ENCODE measurements at regions of chr2 and their contacts with region 1.

Region 1: GRCh38 chr2:131366643-131367042 is 2.7 kb upstream of the RAB6D start:
- DNase-seq: no peak
- ATAC-seq: no peak
- H3K4me3 ChIP-seq: no peak overlapping the region
- H3K27ac ChIP-seq: no peak overlapping the region
- H3K4me1 ChIP-seq: peaks cover 0 to 6% of the 10 kb centered on the region in 2 experiments; a peak in 3 of 5 replicates
- H3K27me3 ChIP-seq: peaks cover 10 to 16% of the 10 kb centered on the region in 2 experiments; a peak in 4 of 5 replicates
- CTCF ChIP-seq: no peak
- EP300 ChIP-seq: no peak
- POLR2A ChIP-seq: no peak
- RAD21 ChIP-seq: no peak

Region 2: DNA sequence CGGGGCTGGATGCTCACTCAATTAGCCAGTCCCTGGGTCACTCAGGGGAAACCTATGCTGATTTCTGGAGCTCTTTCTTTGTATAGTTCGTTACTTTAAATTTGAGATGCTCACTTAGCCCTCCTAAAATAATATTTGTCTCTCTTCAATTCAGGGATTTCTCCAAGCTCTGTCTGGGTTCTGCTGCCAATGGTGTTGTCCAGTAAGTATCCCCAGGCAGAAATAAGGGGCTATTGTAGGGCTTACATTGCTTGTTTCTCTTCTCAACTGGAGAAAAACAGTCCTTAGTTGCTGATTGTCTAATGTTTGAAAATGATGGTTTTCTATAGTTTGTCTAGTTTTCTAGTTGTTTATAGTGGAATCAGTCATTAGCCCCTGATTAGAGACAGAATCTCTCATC is 1382.2 kb before region 1 on chr2:
- CTCF ChIA-PET with region 1: no interaction called
- POLR2A ChIA-PET with region 1: no interaction called
- in situ Hi-C with region 1: loop called (anchors 5 kb)
- intact Hi-C with region 1: no loop called
- DNase-seq: no peak
- ATAC-seq: no peak
- H3K4me3 ChIP-seq: no peak overlapping the region
- H3K27ac ChIP-seq: no peak overlapping the region
- H3K4me1 ChIP-seq: peaks cover 0 to 5% of the 10 kb centered on the region in 2 experiments; a peak in 1 of 5 replicates
- H3K27me3 ChIP-seq: no peaks in the 10 kb centered on the region
- CTCF ChIP-seq: no peak
- EP300 ChIP-seq: no peak
- POLR2A ChIP-seq: no peak
- RAD21 ChIP-seq: no peak